H1 (cell line): ENCODE measurements at regions of chr11 and their contacts with region 1.

Region 1: DNA sequence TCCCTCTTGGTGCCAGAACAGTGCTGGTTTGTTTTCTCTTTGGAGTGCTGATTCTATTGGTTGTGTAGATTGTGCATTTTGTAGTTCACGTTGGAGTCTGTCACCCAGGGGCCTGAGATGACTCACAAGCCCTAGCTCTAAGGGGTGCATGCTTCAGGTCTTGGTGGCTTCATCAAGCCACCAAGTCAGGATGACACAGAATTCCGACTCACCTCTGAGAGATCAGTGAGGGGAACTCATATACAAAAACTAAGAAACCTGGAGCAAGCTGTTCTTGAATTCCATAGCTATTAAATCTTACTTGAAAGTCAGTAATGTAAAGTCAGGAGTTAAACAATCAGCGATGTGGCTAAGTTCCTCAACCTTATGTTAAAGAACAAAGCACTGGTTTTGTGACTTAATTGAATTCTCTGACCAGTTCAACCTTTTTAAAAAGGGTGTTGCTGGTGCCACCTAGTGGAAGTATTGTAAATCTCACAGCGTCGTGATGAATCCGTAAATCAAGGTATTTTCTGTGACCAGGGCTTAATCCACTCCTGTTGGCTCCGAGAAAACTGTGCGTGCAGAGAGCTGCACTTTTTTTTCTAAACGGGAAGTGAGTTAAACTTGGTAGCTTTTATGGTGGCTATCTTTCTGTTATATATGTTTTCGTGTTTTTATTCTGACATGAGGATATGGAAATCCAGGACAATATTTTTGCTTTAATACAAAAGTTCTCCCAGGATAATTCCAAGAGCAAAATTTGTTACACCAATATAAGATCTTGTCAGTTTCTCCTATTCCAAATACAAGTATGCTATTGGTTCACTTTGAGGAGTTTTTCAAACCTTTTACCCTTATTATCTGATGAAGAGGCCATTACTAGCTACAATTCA is 14.6 kb downstream of the MMP13 start:
- DNase-seq: peak in 1 of 2 experiments; percentile 7
- H3K4me3 ChIP-seq: no peak overlapping the region
- H3K27ac ChIP-seq: no peak overlapping the region
- H3K4me1 ChIP-seq: no peaks in the 10 kb centered on the region; a peak in 1 of 7 replicates
- H3K27me3 ChIP-seq: no peaks in the 10 kb centered on the region
- CTCF ChIP-seq: peak in 2 of 3 experiments; percentile 77 to 83; a peak in 3 of 4 replicates
- EP300 ChIP-seq: no peak
- POLR2A ChIP-seq: no peak
- RAD21 ChIP-seq: peak; percentile 80 to 82

Region 2: DNA sequence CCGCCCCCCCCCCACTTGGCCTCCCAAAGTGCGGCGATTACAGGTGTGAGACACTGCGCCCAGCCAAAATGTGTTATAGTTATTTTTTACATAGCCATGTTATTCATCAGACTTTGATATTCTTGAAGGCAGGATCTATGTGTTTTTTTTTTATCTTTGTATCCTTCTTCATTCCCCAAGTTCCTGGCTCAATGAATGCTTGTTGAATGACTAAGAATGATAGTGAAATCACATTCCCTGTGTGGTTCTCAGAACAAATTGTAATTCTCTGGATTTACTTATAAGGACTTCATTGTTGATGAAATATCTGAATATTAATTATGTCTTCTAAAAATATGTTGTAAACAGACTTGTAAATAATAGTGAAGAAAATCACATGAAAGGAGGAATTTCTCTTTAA is 443.9 kb before region 1 on chr11:
- CTCF ChIA-PET with region 1: no interaction called
- POLR2A ChIA-PET with region 1: no interaction called
- DNase-seq: no peak
- H3K4me3 ChIP-seq: no peak overlapping the region
- H3K27ac ChIP-seq: no peak overlapping the region
- H3K4me1 ChIP-seq: peaks cover 0 to 6% (median 2%) of the 10 kb centered on the region in 4 experiments; a peak in 2 of 7 replicates
- H3K27me3 ChIP-seq: no peaks in the 10 kb centered on the region
- CTCF ChIP-seq: no peak
- EP300 ChIP-seq: no peak
- POLR2A ChIP-seq: no peak
- RAD21 ChIP-seq: no peak

Region 3: DNA sequence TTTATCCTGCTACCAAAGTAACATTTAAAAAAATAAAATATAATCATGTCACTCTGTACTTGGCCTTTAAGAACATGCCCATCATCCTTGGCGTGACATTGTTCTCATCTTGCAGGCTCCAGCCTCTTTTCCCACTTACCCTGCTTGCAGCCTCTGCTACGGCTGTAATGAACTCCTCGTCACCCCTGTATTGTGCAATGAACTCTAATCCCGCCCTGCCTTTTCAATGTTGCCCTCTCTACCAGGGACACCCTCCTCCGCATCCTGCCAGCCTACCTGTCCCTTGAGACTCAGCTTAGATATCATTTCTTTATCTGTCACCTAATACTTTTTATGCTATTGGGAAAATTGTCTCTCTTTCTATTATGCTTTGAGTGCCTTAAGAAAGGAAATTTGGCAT is 303.2 kb before region 1 on chr11:
- CTCF ChIA-PET with region 1: no interaction called
- POLR2A ChIA-PET with region 1: no interaction called
- DNase-seq: no peak
- H3K4me3 ChIP-seq: no peak overlapping the region
- H3K27ac ChIP-seq: no peak overlapping the region
- H3K4me1 ChIP-seq: peaks cover 0 to 4% (median 0%) of the 10 kb centered on the region in 4 experiments; a peak in 1 of 7 replicates
- H3K27me3 ChIP-seq: no peaks in the 10 kb centered on the region
- CTCF ChIP-seq: no peak
- EP300 ChIP-seq: no peak
- POLR2A ChIP-seq: no peak
- RAD21 ChIP-seq: no peak

Region 4: GRCh38 chr11:102810945-102811660 is 129.8 kb before region 1 on chr11:
- CTCF ChIA-PET with region 1: interaction called, 30 read pairs
- POLR2A ChIA-PET with region 1: no interaction called
- DNase-seq: no peak
- H3K4me3 ChIP-seq: no peak overlapping the region
- H3K27ac ChIP-seq: no peak overlapping the region
- H3K4me1 ChIP-seq: no peaks in the 10 kb centered on the region
- H3K27me3 ChIP-seq: no peaks in the 10 kb centered on the region
- CTCF ChIP-seq: peak in 2 of 3 experiments; percentile 43 to 60; a peak in 2 of 4 replicates
- EP300 ChIP-seq: no peak
- POLR2A ChIP-seq: no peak
- RAD21 ChIP-seq: peak; percentile 47 to 48; a peak in 3 of 4 replicates

Region 5: GRCh38 chr11:102831489-102832440 is 109.2 kb before region 1 on chr11:
- CTCF ChIA-PET with region 1: interaction called, 21 read pairs
- POLR2A ChIA-PET with region 1: no interaction called
- DNase-seq: peak in 1 of 2 experiments; percentile 71
- H3K4me3 ChIP-seq: peak overlapping the region in 2 of 4 experiments; percentile 10 to 34; a peak in 2 of 8 replicates
- H3K27ac ChIP-seq: no peak overlapping the region
- H3K4me1 ChIP-seq: peaks cover 0 to 7% (median 1%) of the 10 kb centered on the region in 4 experiments; a peak in 4 of 7 replicates
- H3K27me3 ChIP-seq: no peaks in the 10 kb centered on the region; a peak in 2 of 7 replicates
- CTCF ChIP-seq: peak; percentile 52 to 79 (median 64)
- EP300 ChIP-seq: no peak
- POLR2A ChIP-seq: no peak
- RAD21 ChIP-seq: peak; percentile 84

Region 6: GRCh38 chr11:102843474-102843873 is 97.5 kb before region 1 on chr11 and contains the start of gene MMP3:
- CTCF ChIA-PET with region 1: interaction called, 10 read pairs
- POLR2A ChIA-PET with region 1: no interaction called
- DNase-seq: no peak
- H3K4me3 ChIP-seq: no peak within 1 kb of the TSS
- H3K27ac ChIP-seq: no peak within 1 kb of the TSS
- H3K4me1 ChIP-seq: no peaks in the 10 kb centered on the region
- H3K27me3 ChIP-seq: no peaks in the 10 kb centered on the region
- CTCF ChIP-seq: no peak
- EP300 ChIP-seq: no peak
- POLR2A ChIP-seq: no peak
- RAD21 ChIP-seq: no peak
- total RNA-seq, gene MMP3: not detected in 2 replicates

Region 7: DNA sequence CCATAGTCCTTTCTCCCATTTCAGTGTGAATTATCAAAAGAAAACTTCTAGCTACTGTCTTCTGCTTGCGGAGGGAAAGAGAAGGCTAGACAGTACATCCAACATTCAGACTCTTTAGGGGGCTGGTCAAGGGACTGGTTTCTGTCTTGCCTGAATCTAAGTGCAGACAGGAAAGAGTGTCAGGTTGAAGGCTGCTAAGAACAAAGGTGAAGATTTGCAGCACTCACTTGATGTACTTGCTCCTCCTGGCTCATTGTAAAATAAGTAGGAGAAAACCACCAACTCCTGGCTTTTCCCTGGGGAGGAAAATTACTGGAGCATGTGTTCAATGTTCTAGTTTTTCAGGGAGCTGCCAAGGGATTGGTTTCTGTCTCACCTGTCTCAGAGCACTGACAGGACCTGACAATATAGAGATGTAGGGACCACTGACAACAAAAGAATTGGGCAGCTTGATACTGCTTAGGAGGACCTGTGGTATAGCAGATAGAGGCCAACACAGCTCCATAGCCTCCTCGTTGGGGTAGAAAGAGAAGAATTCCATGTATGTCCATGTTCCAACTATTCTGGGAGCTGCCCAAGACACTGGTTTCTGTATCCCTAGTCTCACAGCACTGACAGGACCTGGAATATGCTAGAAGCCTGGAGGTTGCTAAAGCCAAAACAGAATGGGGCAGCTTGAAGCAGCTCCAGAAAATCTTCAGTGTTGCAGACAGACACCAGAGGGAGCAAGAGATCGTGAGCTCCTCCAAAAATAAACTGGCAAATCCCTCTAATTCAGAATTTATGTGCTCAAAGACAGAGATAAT is 26.5 kb before region 1 on chr11:
- CTCF ChIA-PET with region 1: interaction called, 60 read pairs
- POLR2A ChIA-PET with region 1: no interaction called
- DNase-seq: peak; percentile 19 to 54
- H3K4me3 ChIP-seq: no peak overlapping the region
- H3K27ac ChIP-seq: no peak overlapping the region
- H3K4me1 ChIP-seq: peaks cover 0 to 7% (median 5%) of the 10 kb centered on the region in 4 experiments; a peak in 4 of 7 replicates
- H3K27me3 ChIP-seq: no peaks in the 10 kb centered on the region
- CTCF ChIP-seq: peak; percentile 15 to 74 (median 71)
- EP300 ChIP-seq: no peak
- POLR2A ChIP-seq: no peak
- RAD21 ChIP-seq: peak; percentile 64 to 69

Region 8: GRCh38 chr11:102920118-102920684 is 20.8 kb before region 1 on chr11:
- CTCF ChIA-PET with region 1: interaction called, 60 read pairs
- POLR2A ChIA-PET with region 1: no interaction called
- DNase-seq: no peak
- H3K4me3 ChIP-seq: no peak overlapping the region
- H3K27ac ChIP-seq: no peak overlapping the region
- H3K4me1 ChIP-seq: no peaks in the 10 kb centered on the region
- H3K27me3 ChIP-seq: no peaks in the 10 kb centered on the region
- CTCF ChIP-seq: no peak
- EP300 ChIP-seq: no peak
- POLR2A ChIP-seq: no peak
- RAD21 ChIP-seq: no peak

Region 9: GRCh38 chr11:102989379-102990047 is 48.6 kb after region 1 on chr11:
- CTCF ChIA-PET with region 1: no interaction called
- POLR2A ChIA-PET with region 1: no interaction called
- DNase-seq: no peak
- H3K4me3 ChIP-seq: no peak overlapping the region
- H3K27ac ChIP-seq: no peak overlapping the region
- H3K4me1 ChIP-seq: no peaks in the 10 kb centered on the region
- H3K27me3 ChIP-seq: no peaks in the 10 kb centered on the region
- CTCF ChIP-seq: no peak
- EP300 ChIP-seq: no peak
- POLR2A ChIP-seq: no peak
- RAD21 ChIP-seq: no peak